Tibial artery (tissue), 4 donors: ENCODE measurements at regions of chrX and their contacts with region 1.

Region 1: DNA sequence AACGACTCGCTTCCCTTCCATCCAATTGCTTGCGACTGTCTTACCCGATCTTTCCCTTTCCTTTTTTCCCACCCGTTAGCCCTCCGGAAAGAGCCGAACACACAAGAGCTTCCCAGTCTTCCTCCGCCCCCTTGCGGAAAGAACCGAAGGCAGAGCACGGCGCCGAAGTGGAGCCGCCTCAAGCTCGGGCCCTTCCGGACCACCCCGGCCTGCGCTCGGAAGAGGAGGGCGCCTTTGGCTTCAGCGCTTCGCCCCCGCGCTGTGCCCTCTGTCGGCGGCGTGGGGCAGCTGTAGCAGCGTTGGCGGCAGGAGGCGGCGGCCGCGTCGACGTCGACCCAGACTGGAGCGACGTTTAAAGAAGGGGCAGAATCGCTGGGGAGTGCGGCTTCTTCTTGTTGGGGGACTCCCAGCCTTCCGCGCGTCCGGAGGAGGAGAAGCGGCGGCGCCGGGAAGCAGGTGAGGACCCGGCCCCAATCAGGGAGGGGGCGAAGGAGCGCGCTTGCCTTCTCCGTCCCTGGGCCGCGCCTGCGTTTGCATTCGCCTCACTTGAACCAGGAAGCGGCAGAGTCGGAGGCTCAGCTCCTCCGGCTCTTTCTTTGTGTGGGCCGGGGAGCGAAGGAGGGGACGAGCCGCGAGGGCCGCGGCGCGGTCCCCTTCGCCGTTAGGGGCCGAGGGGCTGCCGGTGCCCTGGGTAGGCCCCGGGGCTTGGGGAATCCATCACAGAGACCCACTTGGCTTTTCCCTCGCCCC is at the start of gene ZBTB33:
- DNase-seq: peak; percentile 87 to 95
- H3K4me3 ChIP-seq: peak within 1 kb of the TSS; percentile 80 to 89
- H3K27ac ChIP-seq: peak within 1 kb of the TSS; percentile 85 to 87
- H3K4me1 ChIP-seq: peaks cover 0 to 8% (median 0%) of the 10 kb centered on the region in 4 donors
- H3K27me3 ChIP-seq: no peaks in the 10 kb centered on the region
- CTCF ChIP-seq: peak; percentile 54 to 71

Region 2: DNA sequence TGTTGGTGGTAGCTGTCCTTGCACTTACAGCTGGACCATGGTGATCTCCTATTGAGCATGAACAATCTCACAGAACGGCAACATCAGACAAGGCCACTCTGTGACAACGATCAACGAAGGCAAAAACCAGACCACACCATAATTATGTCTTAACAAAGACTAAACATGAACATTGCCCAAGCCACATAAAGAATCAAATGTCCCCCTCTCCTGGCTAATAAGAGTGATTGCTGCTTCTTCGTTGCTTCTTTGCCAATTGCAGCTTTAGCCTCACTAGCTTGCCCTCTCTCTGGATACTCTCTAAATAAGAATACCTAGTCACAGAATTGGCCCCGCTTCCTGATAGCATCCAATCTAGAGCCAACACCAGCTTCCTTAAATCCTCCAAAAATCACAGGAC is 1056.1 kb before region 1 on chrX:
- intact Hi-C with region 1: no loop called
- DNase-seq: no peak
- H3K4me3 ChIP-seq: no peak overlapping the region
- H3K27ac ChIP-seq: no peak overlapping the region
- H3K4me1 ChIP-seq: no peaks in the 10 kb centered on the region
- H3K27me3 ChIP-seq: no peaks in the 10 kb centered on the region
- CTCF ChIP-seq: no peak

Region 3: GRCh38 chrX:120468825-120469525 is 218.3 kb after region 1 on chrX and contains the start of gene LAMP2:
- intact Hi-C with region 1: loop called (anchors 10 kb)
- DNase-seq: peak; percentile 89 to 94
- H3K4me3 ChIP-seq: peak within 1 kb of the TSS; percentile 63 to 73
- H3K27ac ChIP-seq: peak within 1 kb of the TSS; percentile 85 to 92
- H3K4me1 ChIP-seq: peaks cover 0 to 20% (median 3%) of the 10 kb centered on the region in 4 donors
- H3K27me3 ChIP-seq: no peaks in the 10 kb centered on the region
- CTCF ChIP-seq: no peak

Region 4: GRCh38 chrX:120736989-120737388 is 486.3 kb after region 1 on chrX:
- intact Hi-C with region 1: no loop called
- DNase-seq: no peak
- H3K4me3 ChIP-seq: no peak overlapping the region
- H3K27ac ChIP-seq: no peak overlapping the region
- H3K4me1 ChIP-seq: no peaks in the 10 kb centered on the region
- H3K27me3 ChIP-seq: no peaks in the 10 kb centered on the region
- CTCF ChIP-seq: no peak